Naive thymus-derived CD8-positive, alpha-beta T cell (primary cell): ENCODE measurements at regions of chr1 and their contacts with region 1.

Region 1: DNA sequence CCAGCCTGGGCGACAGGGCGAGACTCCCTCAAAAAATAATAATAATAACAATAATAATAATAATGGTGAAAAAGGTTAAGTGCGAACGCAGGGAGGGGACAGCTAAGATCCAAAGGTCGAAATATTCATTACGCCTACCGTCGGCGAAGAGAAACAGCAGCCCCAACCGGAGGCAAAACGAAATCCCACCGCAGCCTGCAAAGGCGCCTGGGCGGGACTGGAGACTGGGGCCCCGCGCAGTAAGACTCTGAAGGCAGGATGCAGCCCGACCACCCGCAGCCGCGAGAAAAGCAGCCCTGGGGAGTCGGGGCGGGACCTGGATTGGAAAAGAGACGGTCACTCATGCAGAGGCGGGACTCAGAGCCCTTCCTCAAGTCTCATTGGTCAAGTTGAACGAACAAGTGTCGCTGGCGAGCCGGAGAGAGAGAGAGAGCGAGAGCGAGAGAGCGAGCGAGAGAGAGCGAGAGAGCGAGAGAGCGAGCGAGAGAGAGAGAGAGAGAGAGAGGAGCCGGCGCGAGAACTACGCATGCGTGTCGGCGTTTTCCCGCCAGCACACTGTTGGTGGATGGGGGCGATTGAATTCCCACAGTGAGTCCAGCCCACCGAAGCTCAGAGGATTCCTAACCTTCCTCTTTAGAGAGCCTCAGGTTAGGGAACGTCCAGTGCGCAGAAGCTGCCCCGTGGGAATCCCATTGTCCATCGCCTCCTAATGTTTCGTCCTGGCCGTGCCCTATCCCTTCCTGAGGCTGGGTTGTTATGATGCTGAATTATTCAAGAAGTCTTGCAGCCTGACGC is 10.7 kb downstream of the ENTREP3 start:
- DNase-seq: peak; percentile 86 to 99 (median 96)
- ATAC-seq: peak; percentile 94 to 96
- H3K4me3 Mint-ChIP-seq: peak overlapping the region; percentile 77 to 94 (median 89)
- H3K27ac Mint-ChIP-seq: peak overlapping the region; percentile 93 to 100 (median 96)
- H3K4me1 Mint-ChIP-seq: peaks cover 16 to 52% (median 42%) of the 10 kb centered on the region in 4 donors
- H3K27me3 Mint-ChIP-seq: peaks cover 0 to 5% (median 2%) of the 10 kb centered on the region in 5 donors

Region 2: GRCh38 chr1:155172732-155173477 is 71.7 kb before region 1 on chr1 and contains the start of gene KRTCAP2:
- POLR2A ChIA-PET with region 1: interaction called, 12 read pairs
- DNase-seq: peak; percentile 89 to 97 (median 92)
- ATAC-seq: peak; percentile 80 to 83
- H3K4me3 Mint-ChIP-seq: peak within 1 kb of the TSS; percentile 97 to 100 (median 99)
- H3K27ac Mint-ChIP-seq: peak within 1 kb of the TSS; percentile 98 to 100 (median 99)
- H3K4me1 Mint-ChIP-seq: peaks cover 26 to 54% (median 51%) of the 10 kb centered on the region in 4 donors
- H3K27me3 Mint-ChIP-seq: peaks cover 0 to 2% (median 0%) of the 10 kb centered on the region in 5 donors
- polyA plus RNA-seq, gene KRTCAP2: 453 to 495 (median 490) TPM

Region 3: DNA sequence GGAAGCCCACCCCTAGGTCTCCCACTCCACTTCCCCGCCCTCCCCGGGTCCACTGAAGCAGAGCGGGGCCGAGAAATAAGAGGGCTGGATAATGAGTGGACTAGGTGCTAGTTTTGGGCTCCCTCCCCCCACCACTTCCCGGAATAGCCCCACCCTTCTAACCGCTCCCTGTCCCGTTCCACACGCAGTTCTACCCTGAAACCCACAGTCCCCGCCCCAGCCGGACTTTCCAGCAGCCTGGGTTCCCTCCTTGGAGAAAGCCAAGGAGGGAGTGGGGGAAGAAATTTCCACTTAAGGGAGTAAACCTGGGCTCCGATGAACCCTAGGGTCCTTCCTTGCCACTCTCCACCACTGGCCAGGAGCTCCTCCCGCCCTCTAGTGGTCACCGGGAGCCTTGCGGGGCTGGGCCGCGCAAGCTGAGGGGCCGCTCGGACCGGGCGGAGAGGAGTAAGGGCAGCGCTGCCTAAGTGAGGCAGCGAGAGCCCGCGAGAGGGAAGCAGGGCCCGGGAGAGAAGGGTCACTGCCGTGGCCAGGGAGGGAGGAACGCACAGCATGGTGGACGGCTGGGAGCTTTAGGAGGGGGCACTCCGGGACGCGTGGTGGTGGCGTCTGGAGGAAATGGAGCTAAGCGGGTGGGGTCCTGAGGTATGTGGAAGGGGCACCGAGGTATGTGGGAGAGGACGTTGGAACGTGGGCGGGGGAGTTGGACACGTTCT is 51.1 kb before region 1 on chr1:
- POLR2A ChIA-PET with region 1: interaction called, 10 read pairs
- DNase-seq: peak; percentile 40 to 79 (median 60)
- ATAC-seq: peak; percentile 6 to 17
- H3K4me3 Mint-ChIP-seq: peak overlapping the region; percentile 77 to 97 (median 90)
- H3K27ac Mint-ChIP-seq: peak overlapping the region; percentile 93 to 100 (median 98)
- H3K4me1 Mint-ChIP-seq: peaks cover 18 to 33% (median 26%) of the 10 kb centered on the region in 4 donors
- H3K27me3 Mint-ChIP-seq: peaks cover 0 to 2% (median 0%) of the 10 kb centered on the region in 5 donors

Region 4: DNA sequence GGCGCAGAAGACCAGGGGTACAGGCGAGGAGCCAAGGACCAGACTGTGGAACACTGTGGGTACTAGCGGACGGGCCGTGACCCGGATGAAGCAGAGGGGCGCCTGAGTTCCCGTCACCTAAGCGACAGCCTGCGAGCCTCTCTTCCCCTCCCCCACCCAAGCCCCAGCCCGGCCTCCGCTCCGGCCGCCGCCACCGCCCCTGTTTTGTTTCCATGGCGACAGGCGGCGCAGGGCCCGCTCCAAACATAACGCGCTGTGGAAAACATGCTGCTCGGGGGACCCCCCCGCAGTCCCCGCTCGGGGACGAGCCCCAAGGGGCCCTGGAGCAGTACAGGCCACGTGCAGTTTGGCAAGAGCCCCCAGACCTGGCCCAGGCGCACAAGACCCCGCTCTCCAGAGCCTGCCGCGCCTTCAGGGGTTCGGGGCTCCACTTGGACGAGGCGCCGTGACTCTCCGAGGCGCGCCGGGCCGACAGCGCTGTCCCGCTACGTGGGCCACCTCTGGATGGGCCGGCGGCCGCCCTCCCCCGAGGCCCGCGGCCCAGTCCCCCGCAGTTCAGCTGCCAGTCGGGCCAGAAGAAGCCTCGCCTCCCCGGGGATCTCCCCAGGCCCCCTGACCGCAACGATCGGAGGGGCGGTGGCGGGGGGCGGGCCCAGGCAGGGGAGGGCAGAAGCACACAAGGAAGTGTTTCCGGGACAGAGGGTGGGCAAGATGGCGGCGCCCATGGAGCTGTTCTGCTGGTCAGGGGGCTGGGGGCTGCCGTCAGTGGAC is 35.8 kb before region 1 on chr1 and contains the start of gene MTX1:
- POLR2A ChIA-PET with region 1: interaction called, 25 read pairs
- DNase-seq: peak; percentile 81 to 97 (median 92)
- ATAC-seq: peak; percentile 76 to 86
- H3K4me3 Mint-ChIP-seq: peak within 1 kb of the TSS; percentile 83 to 95 (median 88)
- H3K27ac Mint-ChIP-seq: peak within 1 kb of the TSS; percentile 90 to 99 (median 98)
- H3K4me1 Mint-ChIP-seq: peaks cover 22 to 33% (median 30%) of the 10 kb centered on the region in 4 donors
- H3K27me3 Mint-ChIP-seq: no peaks in the 10 kb centered on the region
- polyA plus RNA-seq, gene MTX1: 45.8 to 50.7 (median 48.5) TPM

Region 5: GRCh38 chr1:155227261-155228095 is 17.1 kb before region 1 on chr1:
- POLR2A ChIA-PET with region 1: interaction called, 27 read pairs
- DNase-seq: peak; percentile 91 to 99 (median 98)
- ATAC-seq: peak; percentile 91 to 92
- H3K4me3 Mint-ChIP-seq: peak overlapping the region; percentile 74 to 93 (median 87)
- H3K27ac Mint-ChIP-seq: peak overlapping the region; percentile 84 to 98 (median 94)
- H3K4me1 Mint-ChIP-seq: peaks cover 6 to 46% (median 24%) of the 10 kb centered on the region in 4 donors
- H3K27me3 Mint-ChIP-seq: no peaks in the 10 kb centered on the region

Region 6: DNA sequence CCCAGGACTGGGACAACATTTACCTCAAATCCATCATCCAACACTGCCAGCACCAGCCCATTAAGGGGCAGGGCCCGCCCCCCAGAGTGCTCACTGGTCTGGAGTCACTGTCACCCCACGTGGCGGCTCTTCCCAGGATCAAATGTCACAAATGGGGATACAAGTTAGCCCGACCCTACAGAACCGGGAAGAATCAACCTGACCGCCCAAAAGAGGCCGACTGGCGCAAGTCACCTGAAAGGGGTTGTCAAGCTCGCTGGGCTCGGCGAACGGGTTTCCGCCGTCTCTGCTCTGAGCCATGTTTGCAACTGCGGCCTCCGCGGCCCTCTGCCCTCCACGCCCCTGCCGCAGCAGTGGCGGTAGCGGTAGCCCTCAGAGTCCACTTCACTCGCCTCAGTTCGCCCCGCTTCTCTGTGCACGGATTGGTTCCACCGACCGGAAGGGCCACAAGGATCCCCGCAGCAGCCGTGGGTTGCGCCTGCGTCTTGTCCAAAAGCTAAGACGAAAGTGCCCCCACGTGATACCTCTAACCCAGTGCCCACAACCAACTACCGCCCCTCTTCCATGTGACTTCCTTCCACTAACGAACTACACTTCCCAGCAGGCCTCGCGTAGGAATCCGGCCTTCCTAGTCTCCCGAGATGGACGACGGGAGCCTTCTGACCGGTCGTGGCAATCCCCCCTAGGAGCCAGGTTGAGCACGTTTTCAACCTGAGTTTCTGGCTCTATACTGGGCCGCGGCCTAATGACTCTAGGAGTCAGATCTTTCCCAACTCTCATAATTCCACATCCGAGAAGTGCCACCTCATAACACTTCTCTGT is 17.5 kb after region 1 on chr1 and contains the start of gene SCAMP3:
- POLR2A ChIA-PET with region 1: interaction called, 33 read pairs
- DNase-seq: peak; percentile 65 to 93 (median 82)
- ATAC-seq: peak; percentile 97 to 98
- H3K4me3 Mint-ChIP-seq: peak within 1 kb of the TSS; percentile 94 to 99 (median 98)
- H3K27ac Mint-ChIP-seq: peak within 1 kb of the TSS; percentile 94 to 99 (median 97)
- H3K4me1 Mint-ChIP-seq: peaks cover 21 to 41% (median 29%) of the 10 kb centered on the region in 4 donors
- H3K27me3 Mint-ChIP-seq: no peaks in the 10 kb centered on the region
- polyA plus RNA-seq, gene SCAMP3: 124 to 189 (median 138) TPM

Region 7: DNA sequence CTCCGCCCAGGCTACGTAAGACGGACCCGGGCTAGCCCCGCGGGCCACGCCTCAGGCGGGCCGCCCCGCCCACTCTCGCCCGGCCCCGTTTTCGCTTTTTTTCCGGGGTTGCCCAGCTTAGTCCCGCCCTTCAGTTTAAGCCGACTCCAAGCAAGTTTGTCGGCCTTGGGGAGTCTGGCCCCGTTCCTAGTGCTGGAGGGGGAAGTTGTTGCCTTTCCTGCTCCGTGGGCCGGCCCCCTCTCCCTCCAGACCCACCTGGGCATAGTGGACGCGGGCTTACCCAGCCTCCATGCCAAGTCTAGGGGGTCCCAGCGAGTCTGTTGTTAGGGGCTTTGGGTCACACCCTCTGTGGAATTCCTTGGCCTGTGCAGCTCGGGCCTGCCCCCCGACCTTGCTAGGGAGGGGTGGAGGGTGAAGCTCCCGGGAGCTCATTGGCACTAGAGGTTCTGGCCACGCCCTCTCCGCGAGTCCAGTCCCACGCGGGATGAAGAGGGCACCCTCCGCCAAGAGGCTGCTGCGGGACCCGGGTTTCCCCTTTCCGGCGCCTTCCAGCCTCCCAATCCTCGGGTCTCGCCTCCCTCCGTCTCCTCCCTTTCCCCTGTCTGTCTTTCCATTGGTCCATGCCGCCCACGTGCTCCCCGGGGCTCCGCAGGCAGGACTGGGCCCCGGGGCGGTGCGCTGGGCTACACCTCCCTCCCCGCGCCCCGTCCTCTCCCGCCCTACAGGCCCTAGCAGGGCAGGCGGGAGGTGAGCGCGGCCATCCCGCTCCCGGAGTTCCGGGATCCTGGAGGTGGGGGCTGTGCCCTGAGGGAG is 79.4 kb after region 1 on chr1:
- POLR2A ChIA-PET with region 1: interaction called, 37 read pairs
- DNase-seq: peak; percentile 72 to 91 (median 84)
- ATAC-seq: peak; percentile 81 to 83
- H3K4me3 Mint-ChIP-seq: peak overlapping the region; percentile 82 to 93 (median 90)
- H3K27ac Mint-ChIP-seq: peak overlapping the region; percentile 72 to 94 (median 82)
- H3K4me1 Mint-ChIP-seq: peaks cover 19 to 41% (median 35%) of the 10 kb centered on the region in 4 donors
- H3K27me3 Mint-ChIP-seq: no peaks in the 10 kb centered on the region